Posterior vena cava (tissue), 2 donors: ENCODE measurements at regions of chr14 and their contacts with region 1.

Region 1: GRCh38 chr14:51205486-51205885 is 34.6 kb upstream of the TMX1 start:
- DNase-seq: no peak

Region 2: DNA sequence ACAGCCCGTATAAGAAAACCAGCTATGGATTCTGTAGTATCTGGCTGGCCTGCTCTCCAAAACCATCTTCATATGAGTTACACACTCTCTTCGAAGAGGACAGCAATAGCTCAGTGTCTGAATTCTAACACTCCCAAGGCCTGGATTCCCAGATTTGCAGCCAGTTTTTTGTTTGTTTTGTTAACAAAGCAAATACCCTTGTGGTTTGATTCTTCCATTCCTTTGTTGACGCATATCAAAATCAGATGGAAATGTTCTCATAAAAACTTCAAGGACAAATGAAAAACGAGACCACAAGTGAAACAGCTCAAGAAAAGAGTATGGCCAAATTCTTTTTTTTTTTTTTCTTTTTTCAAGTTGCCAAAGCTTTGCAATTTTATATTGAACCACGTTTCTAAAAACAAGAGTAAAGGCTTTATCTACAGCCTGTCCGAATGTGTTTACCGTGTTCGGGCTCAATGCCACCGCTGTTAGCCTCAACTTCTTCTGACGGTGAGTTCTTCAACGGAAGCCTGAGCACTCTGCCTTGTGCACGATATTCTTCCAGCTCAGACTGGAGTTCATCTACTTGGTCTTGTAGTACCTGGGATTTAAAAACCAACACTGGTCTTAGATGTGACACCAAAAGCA is 442.0 kb before region 1 on chr14:
- intact Hi-C with region 1: no loop called
- DNase-seq: no peak

Region 3: DNA sequence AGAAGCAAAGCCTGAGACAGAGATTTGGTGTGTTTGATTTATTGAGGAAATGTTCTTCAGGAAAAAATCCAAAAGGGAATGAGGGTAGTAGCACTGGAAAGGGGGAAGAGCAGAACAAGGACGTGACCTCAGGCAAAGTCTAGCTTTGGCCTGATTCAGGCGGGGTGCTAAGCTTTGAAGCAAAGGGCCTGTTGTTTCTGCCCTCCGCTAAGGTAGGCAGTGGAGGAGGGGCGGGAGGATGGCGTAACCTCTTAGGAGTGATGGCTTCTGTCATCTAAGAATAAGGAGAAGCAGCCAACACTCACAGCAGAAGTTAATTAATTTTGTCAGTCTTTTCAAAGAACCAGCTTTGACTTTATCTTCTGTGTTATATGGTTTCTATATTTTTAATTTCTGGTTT is 313.2 kb before region 1 on chr14:
- intact Hi-C with region 1: no loop called
- DNase-seq: no peak

Region 4: DNA sequence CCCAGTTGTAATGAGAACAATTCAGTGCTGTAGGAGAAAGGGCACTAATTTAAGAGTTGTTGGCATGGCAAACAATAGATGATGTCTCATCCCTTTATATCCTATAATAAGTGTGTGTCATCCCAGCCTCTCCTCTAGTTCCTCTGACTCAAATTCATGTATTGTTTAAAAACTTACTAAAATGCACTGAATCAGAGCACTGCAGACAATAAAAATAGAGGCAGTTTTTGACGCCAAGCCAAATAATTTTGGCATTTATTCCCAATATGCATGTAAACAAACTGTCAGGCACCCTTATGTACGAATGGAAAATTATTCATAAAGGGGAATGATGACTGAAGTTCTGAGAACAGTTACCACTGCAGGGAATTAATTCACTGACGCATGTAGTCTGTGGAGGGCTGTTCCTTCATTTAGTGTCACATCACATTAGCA is 23.3 kb before region 1 on chr14:
- intact Hi-C with region 1: loop called in 1 of 2 experiments (anchors 1 kb)
- DNase-seq: no peak